Ascending aorta (tissue), 2 donors: ENCODE measurements at regions of chr17 and their contacts with region 1.

Region 1: GRCh38 chr17:41773190-41773588 is 13.3 kb downstream of the JUP start:
- DNase-seq: peak; percentile 21 to 72
- H3K4me3 ChIP-seq: no peak overlapping the region
- H3K27ac ChIP-seq: peak overlapping the region in 1 of 2 donors; percentile 16
- H3K4me1 ChIP-seq: peaks cover 10 to 19% of the 10 kb centered on the region in 2 donors
- H3K27me3 ChIP-seq: no peaks in the 10 kb centered on the region
- CTCF ChIP-seq: no peak

Region 2: GRCh38 chr17:41710468-41711090 is 62.6 kb before region 1 on chr17:
- intact Hi-C with region 1: no loop called
- DNase-seq: no peak
- H3K4me3 ChIP-seq: no peak overlapping the region
- H3K27ac ChIP-seq: no peak overlapping the region
- H3K4me1 ChIP-seq: no peaks in the 10 kb centered on the region
- H3K27me3 ChIP-seq: no peaks in the 10 kb centered on the region
- CTCF ChIP-seq: no peak

Region 3: DNA sequence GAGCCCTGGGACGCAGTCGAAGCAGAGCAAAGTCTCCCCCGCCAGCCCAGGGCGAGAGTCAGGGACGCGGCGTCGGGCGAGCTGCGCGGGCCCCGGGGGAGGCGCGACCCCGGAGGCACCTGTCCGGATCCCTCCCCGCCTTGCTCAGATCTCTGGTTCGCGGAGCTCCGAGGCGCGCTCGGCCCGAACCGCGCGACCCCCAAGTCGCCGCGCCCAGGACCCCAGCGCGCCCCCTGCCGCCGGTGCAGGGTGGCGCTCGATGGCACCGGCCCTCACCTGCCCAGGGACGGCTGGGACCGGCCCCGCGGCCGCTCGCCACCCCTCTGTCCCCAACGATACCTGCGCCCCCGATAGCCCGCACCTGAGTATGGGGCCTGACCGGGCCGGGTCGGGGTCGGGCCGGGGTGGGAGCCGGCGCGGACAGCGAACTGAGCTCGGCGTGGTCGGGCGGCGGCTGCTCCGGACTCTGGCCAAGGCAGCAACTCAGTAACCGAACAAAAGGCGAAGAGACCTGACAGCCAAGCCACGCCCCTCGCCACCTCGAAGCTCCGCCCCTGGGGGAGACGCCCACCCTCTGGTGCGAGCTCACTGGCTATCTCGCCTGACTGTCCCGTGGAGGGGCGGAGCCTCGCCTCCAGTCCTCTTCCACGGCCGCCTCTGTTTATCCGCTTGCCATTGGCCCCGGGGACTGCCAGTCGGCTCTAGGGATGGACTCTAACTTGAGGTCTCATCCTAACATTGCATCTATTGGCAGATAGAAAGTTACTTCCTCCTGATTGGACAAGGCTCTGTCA is 13.2 kb after region 1 on chr17 and contains the start of gene JUP:
- intact Hi-C with region 1: loop called (anchors 2 kb)
- DNase-seq: peak; percentile 98 to 99
- H3K4me3 ChIP-seq: peak within 1 kb of the TSS; percentile 67 to 71
- H3K27ac ChIP-seq: peak within 1 kb of the TSS; percentile 66 to 71
- H3K4me1 ChIP-seq: peaks cover 8 to 30% of the 10 kb centered on the region in 2 donors
- H3K27me3 ChIP-seq: no peaks in the 10 kb centered on the region
- CTCF ChIP-seq: peak; percentile 16 to 57 (median 34)
- total RNA-seq, gene JUP: 47.9 TPM

Region 4: DNA sequence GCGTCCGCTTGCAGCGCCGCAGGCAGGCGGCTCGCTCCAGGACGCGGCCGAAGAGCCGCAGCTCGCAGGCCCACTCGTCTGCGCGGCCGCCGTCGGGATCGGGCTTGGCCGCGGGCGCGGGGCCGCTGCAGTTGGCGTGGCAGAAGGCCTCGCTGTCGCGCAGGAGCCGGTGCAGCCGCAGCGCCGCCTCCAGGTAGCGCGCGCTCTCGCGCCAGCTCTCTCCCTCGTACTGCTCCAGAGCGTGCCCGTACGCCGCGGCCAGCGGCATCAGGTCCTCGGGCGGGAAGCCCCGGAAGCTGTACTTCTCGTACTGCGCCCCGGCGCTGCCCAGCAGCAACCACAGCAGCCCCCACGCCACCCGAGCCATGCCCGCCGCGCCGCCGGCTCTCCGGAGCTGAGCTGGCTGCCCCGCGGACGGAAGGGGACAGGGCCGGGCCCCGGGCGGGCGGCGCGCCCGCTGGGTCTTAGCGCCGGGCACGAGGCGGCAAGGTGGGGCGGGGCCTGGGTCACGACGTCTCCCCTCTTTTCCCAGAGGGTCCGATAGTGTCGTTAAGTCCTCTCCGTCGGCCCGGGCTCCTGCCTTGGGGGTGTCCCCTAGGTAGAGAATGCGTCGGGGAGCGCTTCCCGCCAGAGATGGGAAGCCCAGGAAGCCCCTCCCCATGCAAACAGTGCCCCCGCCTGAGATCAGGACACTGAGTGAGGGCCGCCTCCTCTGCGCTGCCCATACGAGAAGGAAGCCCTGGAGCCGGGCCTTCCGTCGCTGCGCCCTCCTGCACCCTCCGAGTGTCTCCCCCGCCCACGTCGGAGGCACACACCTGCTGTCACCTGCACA is 38.6 kb after region 1 on chr17 and contains the start of gene P3H4:
- intact Hi-C with region 1: no loop called
- DNase-seq: peak in 1 of 2 donors; percentile 85
- H3K4me3 ChIP-seq: peak within 1 kb of the TSS; percentile 81 to 89
- H3K27ac ChIP-seq: peak within 1 kb of the TSS; percentile 77 to 87
- H3K4me1 ChIP-seq: peaks cover 10 to 20% of the 10 kb centered on the region in 2 donors
- H3K27me3 ChIP-seq: no peaks in the 10 kb centered on the region
- CTCF ChIP-seq: peak; percentile 62 to 83 (median 76)
- total RNA-seq, gene P3H4: 61.4 TPM